SK-N-SH (cell line): ENCODE measurements at regions of chr1 and their contacts with region 1.

Region 1: GRCh38 chr1:32426489-32427255 is 32.4 kb upstream of the BSDC1 start:
- DNase-seq: peak; percentile 77
- H3K4me3 ChIP-seq: peak overlapping the region in 1 of 2 experiments; percentile 52; a peak in 2 of 4 replicates
- H3K27ac ChIP-seq: no peak overlapping the region
- H3K4me1 ChIP-seq: peaks cover 0 to 8% of the 10 kb centered on the region in 2 experiments; a peak in 1 of 4 replicates
- H3K27me3 ChIP-seq: peaks cover 22% of the 10 kb centered on the region; the same call in 1 of the 2 replicates
- CTCF ChIP-seq: no peak
- EP300 ChIP-seq: no peak
- RAD21 ChIP-seq: no peak

Region 2: GRCh38 chr1:32400876-32401631 is 25.6 kb before region 1 on chr1:
- CTCF ChIA-PET with region 1: interaction called, 28 read pairs
- POLR2A ChIA-PET with region 1: no interaction called
- DNase-seq: peak; percentile 87
- H3K4me3 ChIP-seq: peak overlapping the region in 1 of 2 experiments; percentile 7; a peak in 1 of 4 replicates
- H3K27ac ChIP-seq: no peak overlapping the region
- H3K4me1 ChIP-seq: no peaks in the 10 kb centered on the region; a peak in 1 of 4 replicates
- H3K27me3 ChIP-seq: no peaks in the 10 kb centered on the region
- CTCF ChIP-seq: peak; percentile 92
- EP300 ChIP-seq: no peak
- RAD21 ChIP-seq: peak; percentile 95

Region 3: DNA sequence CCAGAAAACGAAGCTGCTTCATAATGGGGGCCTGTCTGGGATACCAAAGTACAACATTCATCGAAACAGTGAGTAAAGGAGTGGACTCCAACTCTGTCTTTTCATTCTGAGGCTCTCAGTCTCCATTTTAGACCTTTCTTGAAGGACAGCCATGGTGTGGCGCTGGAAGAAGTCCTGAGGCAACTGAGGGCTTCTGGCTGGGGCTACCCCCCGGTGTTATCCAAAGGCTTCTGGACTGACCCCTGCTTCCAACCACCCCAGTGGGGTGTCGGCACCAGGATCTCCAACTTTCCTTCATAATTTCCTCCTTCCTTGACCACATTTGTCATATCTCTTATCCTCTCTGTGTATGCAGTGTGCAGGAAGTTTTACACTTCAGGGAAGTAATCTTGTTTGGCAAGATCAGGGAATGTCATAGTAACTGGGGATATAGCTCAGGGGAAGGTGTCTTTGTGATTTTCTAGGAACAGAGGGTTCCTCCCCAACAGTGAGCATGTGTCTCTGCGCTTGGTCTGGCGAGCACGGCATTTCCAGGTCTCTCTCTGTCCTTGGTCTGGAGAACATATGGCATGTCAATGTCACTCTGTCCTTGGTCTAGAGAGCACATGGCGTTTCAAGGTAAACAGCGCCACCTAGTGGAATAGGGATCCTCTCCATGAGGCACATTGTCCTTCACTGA is 13.0 kb before region 1 on chr1:
- CTCF ChIA-PET with region 1: interaction called, 16 read pairs
- POLR2A ChIA-PET with region 1: no interaction called
- DNase-seq: peak; percentile 66
- H3K4me3 ChIP-seq: no peak overlapping the region; a peak in 1 of 4 replicates
- H3K27ac ChIP-seq: no peak overlapping the region
- H3K4me1 ChIP-seq: peaks cover 0 to 4% of the 10 kb centered on the region in 2 experiments; a peak in 1 of 4 replicates
- H3K27me3 ChIP-seq: no peaks in the 10 kb centered on the region; the same call in none of the 2 replicates
- CTCF ChIP-seq: peak; percentile 82
- EP300 ChIP-seq: no peak
- RAD21 ChIP-seq: peak; percentile 89

Region 4: DNA sequence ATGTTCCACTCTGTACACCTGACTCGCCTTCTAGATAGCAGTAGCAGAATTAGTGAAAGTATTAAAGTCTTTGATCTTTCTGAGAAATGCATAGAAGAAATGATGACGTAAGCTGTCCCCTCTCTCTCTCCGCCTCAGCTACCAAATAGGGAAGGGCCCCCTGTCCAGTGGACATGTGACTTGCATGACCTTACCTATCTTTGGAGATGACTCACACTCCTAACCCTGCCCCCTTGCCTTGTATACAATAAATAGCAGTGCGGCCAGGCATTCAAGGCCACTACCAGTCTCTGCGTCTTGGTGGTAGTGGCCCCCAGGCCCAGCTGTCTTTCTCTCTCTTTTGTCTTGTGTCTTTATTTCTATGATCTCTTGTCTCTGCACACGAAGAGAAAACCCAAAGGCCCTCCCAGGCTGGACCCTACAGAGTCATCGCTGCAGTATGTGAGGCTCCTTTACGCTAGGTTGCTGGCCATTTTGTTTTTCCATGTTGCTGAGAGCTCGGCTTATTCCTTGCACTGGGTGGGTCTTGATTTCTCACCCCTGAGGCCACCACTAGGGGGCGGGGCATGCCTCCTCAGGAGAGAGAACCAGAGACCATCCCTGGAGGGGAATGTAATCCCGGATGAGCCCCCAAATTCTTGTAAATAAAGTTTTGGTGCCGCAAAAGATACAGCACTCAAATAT is 22.2 kb after region 1 on chr1:
- CTCF ChIA-PET with region 1: interaction called, 20 read pairs
- POLR2A ChIA-PET with region 1: no interaction called
- DNase-seq: no peak
- H3K4me3 ChIP-seq: no peak overlapping the region
- H3K27ac ChIP-seq: no peak overlapping the region
- H3K4me1 ChIP-seq: no peaks in the 10 kb centered on the region
- H3K27me3 ChIP-seq: no peaks in the 10 kb centered on the region; the same call in 1 of the 2 replicates
- CTCF ChIP-seq: peak; percentile 17
- EP300 ChIP-seq: no peak
- RAD21 ChIP-seq: no peak

Region 5: GRCh38 chr1:32606565-32607371 is 180.1 kb after region 1 on chr1:
- CTCF ChIA-PET with region 1: no interaction called
- POLR2A ChIA-PET with region 1: no interaction called
- DNase-seq: no peak
- H3K4me3 ChIP-seq: no peak overlapping the region
- H3K27ac ChIP-seq: no peak overlapping the region
- H3K4me1 ChIP-seq: no peaks in the 10 kb centered on the region; a peak in 1 of 4 replicates
- H3K27me3 ChIP-seq: no peaks in the 10 kb centered on the region
- CTCF ChIP-seq: no peak
- EP300 ChIP-seq: no peak
- RAD21 ChIP-seq: no peak